H1 (cell line): ENCODE measurements at regions of chr20 and their contacts with region 1.

Region 1: GRCh38 chr20:33299111-33299603 is 16.1 kb downstream of the BPIFB1 start:
- DNase-seq: peak; percentile 66 to 98
- H3K4me3 ChIP-seq: peak overlapping the region in 1 of 4 experiments; percentile 22; a peak in 1 of 8 replicates
- H3K27ac ChIP-seq: no peak overlapping the region
- H3K4me1 ChIP-seq: no peaks in the 10 kb centered on the region
- H3K27me3 ChIP-seq: peaks cover 0 to 2% (median 0%) of the 10 kb centered on the region in 4 experiments; a peak in 3 of 7 replicates
- CTCF ChIP-seq: peak; percentile 94 to 97 (median 97)
- EP300 ChIP-seq: no peak
- POLR2A ChIP-seq: no peak
- RAD21 ChIP-seq: peak; percentile 86 to 93

Region 2: GRCh38 chr20:33202451-33202850 is 96.7 kb before region 1 on chr20:
- CTCF ChIA-PET with region 1: no interaction called
- POLR2A ChIA-PET with region 1: no interaction called
- DNase-seq: no peak
- H3K4me3 ChIP-seq: no peak overlapping the region
- H3K27ac ChIP-seq: no peak overlapping the region
- H3K4me1 ChIP-seq: no peaks in the 10 kb centered on the region
- H3K27me3 ChIP-seq: no peaks in the 10 kb centered on the region
- CTCF ChIP-seq: no peak
- EP300 ChIP-seq: no peak
- POLR2A ChIP-seq: no peak
- RAD21 ChIP-seq: no peak

Region 3: GRCh38 chr20:33233129-33233774 is 65.9 kb before region 1 on chr20:
- CTCF ChIA-PET with region 1: interaction called, 15 read pairs
- POLR2A ChIA-PET with region 1: no interaction called
- DNase-seq: peak; percentile 21 to 54
- H3K4me3 ChIP-seq: no peak overlapping the region
- H3K27ac ChIP-seq: no peak overlapping the region
- H3K4me1 ChIP-seq: 0 out of 7 replicates have a peak, but pooled peaks cover 0 to 3% (median 0%) of the 10 kb centered on the region in 4 experiments
- H3K27me3 ChIP-seq: no peaks in the 10 kb centered on the region
- CTCF ChIP-seq: peak; percentile 66 to 79 (median 77)
- EP300 ChIP-seq: no peak
- POLR2A ChIP-seq: no peak
- RAD21 ChIP-seq: peak; percentile 74 to 87

Region 4: GRCh38 chr20:33249456-33249855 is 49.7 kb before region 1 on chr20:
- CTCF ChIA-PET with region 1: interaction called, 16 read pairs
- POLR2A ChIA-PET with region 1: no interaction called
- DNase-seq: no peak
- H3K4me3 ChIP-seq: no peak overlapping the region
- H3K27ac ChIP-seq: no peak overlapping the region
- H3K4me1 ChIP-seq: no peaks in the 10 kb centered on the region
- H3K27me3 ChIP-seq: no peaks in the 10 kb centered on the region
- CTCF ChIP-seq: no peak
- EP300 ChIP-seq: no peak
- POLR2A ChIP-seq: no peak
- RAD21 ChIP-seq: no peak

Region 5: GRCh38 chr20:33277471-33278441 is 21.4 kb before region 1 on chr20:
- CTCF ChIA-PET with region 1: interaction called, 13 read pairs
- POLR2A ChIA-PET with region 1: no interaction called
- DNase-seq: no peak
- H3K4me3 ChIP-seq: no peak overlapping the region
- H3K27ac ChIP-seq: 0 out of 2 replicates have a peak overlapping the region, but pooled peaks have one; percentile 1
- H3K4me1 ChIP-seq: peaks cover 0 to 14% (median 11%) of the 10 kb centered on the region in 4 experiments; a peak in 6 of 7 replicates
- H3K27me3 ChIP-seq: no peaks in the 10 kb centered on the region
- CTCF ChIP-seq: no peak
- EP300 ChIP-seq: no peak
- POLR2A ChIP-seq: no peak
- RAD21 ChIP-seq: no peak

Region 6: GRCh38 chr20:33284238-33284637 is 14.9 kb before region 1 on chr20:
- CTCF ChIA-PET with region 1: interaction called, 14 read pairs
- POLR2A ChIA-PET with region 1: interaction called, 4 read pairs
- DNase-seq: no peak
- H3K4me3 ChIP-seq: no peak overlapping the region
- H3K27ac ChIP-seq: no peak overlapping the region
- H3K4me1 ChIP-seq: peaks cover 0 to 2% (median 0%) of the 10 kb centered on the region in 4 experiments; a peak in 3 of 7 replicates
- H3K27me3 ChIP-seq: no peaks in the 10 kb centered on the region
- CTCF ChIP-seq: no peak
- EP300 ChIP-seq: no peak
- POLR2A ChIP-seq: no peak
- RAD21 ChIP-seq: no peak

Region 7: DNA sequence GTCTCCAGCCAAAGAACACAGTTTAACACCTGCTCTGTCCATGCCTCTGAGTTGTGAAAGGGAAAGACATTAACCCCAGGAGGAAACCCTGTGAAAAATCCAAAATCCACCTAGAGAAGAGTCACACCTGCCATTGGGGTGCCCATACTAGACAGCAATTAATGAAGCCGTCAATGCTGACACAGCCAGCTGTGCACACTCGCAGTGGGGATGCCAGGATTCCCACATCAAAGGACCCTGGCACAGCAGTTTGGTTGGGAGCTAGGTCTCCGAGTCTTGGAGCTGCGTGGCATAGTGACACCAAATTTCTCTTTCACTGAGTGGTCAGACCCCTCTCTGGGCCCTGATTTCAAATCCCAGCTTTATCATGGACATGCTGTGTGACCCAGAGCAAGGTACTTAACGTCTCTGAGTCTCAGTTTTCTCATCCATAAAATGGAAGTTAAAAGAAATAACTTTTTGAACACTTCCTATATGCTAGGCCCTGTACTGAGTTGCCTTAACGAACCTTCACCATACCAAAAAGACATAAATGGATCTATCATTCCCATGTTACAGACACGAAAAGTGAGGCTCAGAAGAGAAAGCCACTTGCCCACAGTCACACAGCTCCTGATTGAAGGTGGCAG is 14.6 kb after region 1 on chr20:
- CTCF ChIA-PET with region 1: interaction called, 21 read pairs
- POLR2A ChIA-PET with region 1: no interaction called
- DNase-seq: no peak
- H3K4me3 ChIP-seq: no peak overlapping the region
- H3K27ac ChIP-seq: no peak overlapping the region
- H3K4me1 ChIP-seq: no peaks in the 10 kb centered on the region
- H3K27me3 ChIP-seq: no peaks in the 10 kb centered on the region; a peak in 2 of 7 replicates
- CTCF ChIP-seq: no peak
- EP300 ChIP-seq: no peak
- POLR2A ChIP-seq: no peak
- RAD21 ChIP-seq: no peak

Region 8: GRCh38 chr20:33351696-33352095 is 52.5 kb after region 1 on chr20:
- CTCF ChIA-PET with region 1: no interaction called
- POLR2A ChIA-PET with region 1: no interaction called
- DNase-seq: no peak
- H3K4me3 ChIP-seq: no peak overlapping the region
- H3K27ac ChIP-seq: no peak overlapping the region
- H3K4me1 ChIP-seq: peaks cover 9 to 15% (median 10%) of the 10 kb centered on the region in 4 experiments; a peak in 6 of 7 replicates
- H3K27me3 ChIP-seq: no peaks in the 10 kb centered on the region
- CTCF ChIP-seq: no peak
- EP300 ChIP-seq: no peak
- POLR2A ChIP-seq: no peak
- RAD21 ChIP-seq: no peak